ENCODE measurements at regions of chr2 and their contacts with region 1.

Region 1: GRCh38 chr2:105521205-105521604 is 122.4 kb upstream of the FHL2 start:
- DNase-seq: no peak
- ATAC-seq: no peak
- H3K4me3 Mint-ChIP-seq: no peak overlapping the region
- H3K27ac Mint-ChIP-seq: no peak overlapping the region
- H3K4me1 Mint-ChIP-seq: no peaks in the 10 kb centered on the region
- H3K27me3 Mint-ChIP-seq: peaks cover 4% of the 10 kb centered on the region

Region 2: DNA sequence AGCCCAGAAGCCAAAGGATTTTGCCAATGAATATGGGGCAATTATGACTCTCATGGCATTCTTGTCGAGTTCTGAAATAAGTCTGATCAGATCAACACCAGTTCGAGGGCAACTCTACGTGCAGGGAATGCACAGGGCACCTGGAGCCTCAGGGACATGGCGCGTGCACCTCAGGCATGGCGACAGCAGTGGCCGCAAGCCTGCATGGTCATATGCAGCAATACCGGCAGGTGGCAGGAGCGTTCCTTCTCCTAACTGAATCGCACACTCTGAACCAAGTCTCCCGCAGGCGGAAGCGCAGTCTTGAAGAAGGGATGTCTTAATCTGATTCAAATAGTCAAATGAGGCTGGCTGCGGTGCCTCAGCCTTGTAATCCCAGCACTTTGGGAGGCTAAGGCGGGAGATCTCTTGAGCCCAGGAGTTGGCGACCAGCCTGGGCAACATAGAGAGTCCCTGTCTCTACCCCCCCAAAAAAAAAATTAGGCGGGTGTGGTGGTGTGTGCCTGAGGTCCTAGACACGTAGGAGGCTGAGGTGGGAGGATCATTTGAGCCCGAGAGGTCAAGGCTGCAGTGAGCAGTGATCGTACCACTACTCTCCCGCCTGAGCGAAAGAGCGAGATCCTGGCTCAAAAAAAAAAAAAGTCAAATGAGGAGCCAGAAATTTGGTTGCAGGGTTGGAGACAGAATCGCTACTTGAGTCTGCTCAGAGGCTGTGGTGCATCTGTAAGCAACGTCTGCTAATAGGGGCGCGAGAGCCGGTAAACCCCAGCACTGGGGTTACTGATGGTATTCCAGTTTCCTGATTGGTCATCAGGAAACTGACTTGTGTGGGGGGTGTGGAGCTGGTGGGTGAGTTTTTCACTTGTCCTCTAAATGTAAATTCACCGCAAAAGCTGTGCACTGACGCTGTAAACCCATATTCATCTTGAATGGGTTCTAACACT is 151.2 kb before region 1 on chr2:
- CTCF ChIA-PET with region 1: interaction called, 48 read pairs
- DNase-seq: peak; percentile 94
- ATAC-seq: peak; percentile 91
- H3K4me3 Mint-ChIP-seq: peak overlapping the region; percentile 50
- H3K27ac Mint-ChIP-seq: peak overlapping the region; percentile 54
- H3K4me1 Mint-ChIP-seq: peaks cover 43% of the 10 kb centered on the region
- H3K27me3 Mint-ChIP-seq: no peaks in the 10 kb centered on the region

Region 3: DNA sequence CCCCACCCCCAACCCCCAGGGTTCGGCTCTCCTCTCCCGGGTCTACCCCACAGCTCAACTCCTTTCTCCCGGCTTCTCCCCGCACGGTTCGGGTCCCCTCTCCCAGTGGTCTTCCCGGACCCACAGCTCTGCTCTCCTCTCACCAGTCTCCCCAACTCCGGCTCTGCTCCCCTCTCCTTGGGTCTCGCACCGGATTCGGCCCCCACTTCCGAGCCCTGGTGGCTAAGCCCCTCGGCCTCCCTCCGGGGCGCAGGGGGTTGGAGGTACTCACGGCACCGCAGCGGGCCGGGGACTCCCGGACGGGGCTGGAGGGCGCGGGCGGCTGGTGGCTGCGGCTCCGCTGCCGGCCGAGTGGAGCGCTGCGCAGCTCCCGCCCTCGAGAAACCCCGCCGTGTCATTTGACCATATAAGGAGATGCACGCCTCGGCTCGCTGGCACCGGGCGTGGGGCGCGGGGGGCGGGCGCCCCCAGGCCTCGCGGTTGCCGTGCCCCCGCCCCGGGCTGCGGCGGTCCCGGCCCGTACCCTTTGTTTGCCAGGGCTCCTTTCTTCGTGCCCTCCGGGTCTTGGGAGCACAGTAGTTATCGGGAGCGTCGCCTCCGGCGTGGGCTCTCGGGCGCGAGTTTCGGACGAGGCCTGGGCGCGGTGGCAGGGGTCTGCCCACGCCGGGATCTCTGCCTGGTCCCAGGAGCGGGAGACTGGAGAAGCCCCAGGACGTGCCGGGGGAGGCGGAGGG is 122.3 kb before region 1 on chr2 and contains the start of gene FHL2:
- CTCF ChIA-PET with region 1: interaction called, 10 read pairs
- DNase-seq: peak; percentile 72
- ATAC-seq: peak; percentile 100
- H3K4me3 Mint-ChIP-seq: peak within 1 kb of the TSS; percentile 70
- H3K27ac Mint-ChIP-seq: peak within 1 kb of the TSS; percentile 44
- H3K4me1 Mint-ChIP-seq: peaks cover 2% of the 10 kb centered on the region
- H3K27me3 Mint-ChIP-seq: peaks cover 45% of the 10 kb centered on the region
- total RNA-seq, gene FHL2: 3.4 to 4.1 TPM

Measured in activated CD8-positive, alpha-beta memory T cell treated with anti-CD3 and anti-CD28 coated beads, Interleukin-2, amount 10 ng/mL, durations not matched to agents 7 days and 5 days (primary cell).